GM12878 (cell line): ENCODE measurements at regions of chr1 and their contacts with region 1.

Region 1: DNA sequence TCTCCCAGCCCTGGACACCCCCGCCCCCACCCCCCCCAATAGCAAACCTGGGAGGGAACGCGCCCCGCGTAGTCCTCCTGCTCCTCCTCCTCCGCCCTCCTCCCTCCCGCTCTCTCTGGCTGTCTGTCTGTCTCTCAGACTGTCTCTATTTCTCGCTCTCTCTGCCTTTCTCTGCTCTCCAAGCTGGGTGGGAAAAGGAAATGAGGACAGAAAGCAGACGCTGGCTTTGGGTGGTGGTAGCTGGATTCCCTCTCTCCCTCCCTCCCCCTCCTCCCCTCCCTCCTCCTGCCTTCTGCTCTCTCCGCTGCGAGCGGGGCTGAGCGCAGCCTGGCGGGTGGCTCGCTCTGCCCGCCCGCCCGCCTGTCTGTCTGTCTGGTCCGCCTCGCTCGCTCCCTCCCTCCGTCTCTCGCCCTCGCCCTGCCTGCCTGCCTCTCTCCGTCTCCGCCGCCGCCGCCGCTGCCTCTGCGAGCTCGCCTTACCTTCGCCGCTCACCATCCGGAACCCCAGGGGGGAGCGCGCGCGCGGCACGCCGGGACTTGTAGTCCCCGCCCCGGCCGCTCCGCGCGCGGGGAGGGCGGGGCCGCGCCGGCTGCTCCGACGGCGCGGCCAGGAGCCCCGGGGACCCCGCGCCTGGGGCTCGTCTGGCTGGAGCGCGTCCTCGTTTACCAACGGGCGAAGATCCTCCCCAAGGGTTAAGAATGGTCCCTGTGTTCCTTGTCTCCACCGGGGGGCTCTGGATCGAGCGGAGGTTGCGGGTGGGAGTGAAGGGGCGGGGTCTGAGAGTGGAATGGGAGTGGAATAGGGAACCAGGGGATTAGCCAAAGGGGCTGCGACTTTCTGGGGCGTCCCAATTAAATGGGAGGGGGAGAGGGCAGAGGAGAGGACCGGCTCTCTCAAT is at the start of gene AHDC1:
- DNase-seq: no peak
- ATAC-seq: peak; percentile 75
- H3K4me3 ChIP-seq: peak within 1 kb of the TSS; percentile 83
- H3K27ac ChIP-seq: no peak within 1 kb of the TSS; the same call in 1 of the 2 replicates
- H3K4me1 ChIP-seq: peaks cover 40% of the 10 kb centered on the region
- H3K27me3 ChIP-seq: no peaks in the 10 kb centered on the region
- CTCF ChIP-seq: no peak
- EP300 ChIP-seq: no peak
- POLR2A ChIP-seq: peak; percentile 94
- RAD21 ChIP-seq: no peak
- polyA plus RNA-seq, gene AHDC1: 0.21 to 0.26 TPM

Region 2: DNA sequence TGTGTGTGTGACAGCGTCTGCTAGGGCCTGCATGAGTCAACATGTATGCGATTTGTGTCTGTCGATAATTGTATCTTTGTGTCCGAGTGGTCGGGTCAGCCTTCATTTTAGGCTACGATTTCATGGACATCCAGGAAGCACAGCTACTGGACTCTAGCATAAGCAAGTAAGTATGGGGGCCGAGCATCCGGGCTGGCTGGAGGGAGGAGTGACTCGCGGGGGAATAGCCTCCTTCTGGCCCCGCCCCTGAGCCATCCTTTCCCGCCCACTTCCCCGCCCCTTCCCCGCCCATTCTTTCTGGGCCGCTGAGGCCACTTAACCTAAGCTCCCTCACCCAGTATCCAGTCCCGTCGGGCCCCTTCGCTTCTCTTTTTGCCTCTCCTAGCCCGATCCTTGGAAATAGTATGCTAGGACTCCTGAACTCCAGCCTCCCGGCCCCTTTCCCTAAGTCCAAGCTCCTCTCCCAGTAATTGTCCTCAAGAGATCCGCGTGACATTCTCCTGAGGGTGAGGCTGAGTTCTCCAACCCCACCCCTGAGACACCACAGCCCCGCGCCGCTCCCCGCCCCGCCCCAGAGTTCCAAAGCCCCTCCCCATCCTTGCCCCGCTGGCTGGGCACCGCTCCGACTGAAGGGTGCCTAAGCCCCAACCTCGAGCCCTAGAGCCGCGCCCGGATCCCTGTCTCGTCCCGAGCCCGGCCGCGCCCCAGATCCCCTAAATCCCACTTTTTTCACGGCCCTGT is 238.4 kb before region 1 on chr1:
- CTCF ChIA-PET with region 1: interaction called, 28 read pairs
- POLR2A ChIA-PET with region 1: interaction called, 4 read pairs
- RAD21 ChIA-PET with region 1: interaction called, 7 read pairs
- SMC1A ChIA-PET with region 1: no interaction called
- in situ Hi-C with region 1: no loop called
- intact Hi-C with region 1: no loop called
- DNase-seq: no peak
- ATAC-seq: peak; percentile 83
- H3K4me3 ChIP-seq: peak overlapping the region; percentile 76
- H3K27ac ChIP-seq: no peak overlapping the region
- H3K4me1 ChIP-seq: peaks cover 15% of the 10 kb centered on the region
- H3K27me3 ChIP-seq: no peaks in the 10 kb centered on the region
- CTCF ChIP-seq: no peak
- EP300 ChIP-seq: 0 out of 4 replicates have a peak, but pooled peaks of 1 of the 2 experiments have one; percentile 18
- POLR2A ChIP-seq: peak; percentile 50
- RAD21 ChIP-seq: no peak

Region 3: DNA sequence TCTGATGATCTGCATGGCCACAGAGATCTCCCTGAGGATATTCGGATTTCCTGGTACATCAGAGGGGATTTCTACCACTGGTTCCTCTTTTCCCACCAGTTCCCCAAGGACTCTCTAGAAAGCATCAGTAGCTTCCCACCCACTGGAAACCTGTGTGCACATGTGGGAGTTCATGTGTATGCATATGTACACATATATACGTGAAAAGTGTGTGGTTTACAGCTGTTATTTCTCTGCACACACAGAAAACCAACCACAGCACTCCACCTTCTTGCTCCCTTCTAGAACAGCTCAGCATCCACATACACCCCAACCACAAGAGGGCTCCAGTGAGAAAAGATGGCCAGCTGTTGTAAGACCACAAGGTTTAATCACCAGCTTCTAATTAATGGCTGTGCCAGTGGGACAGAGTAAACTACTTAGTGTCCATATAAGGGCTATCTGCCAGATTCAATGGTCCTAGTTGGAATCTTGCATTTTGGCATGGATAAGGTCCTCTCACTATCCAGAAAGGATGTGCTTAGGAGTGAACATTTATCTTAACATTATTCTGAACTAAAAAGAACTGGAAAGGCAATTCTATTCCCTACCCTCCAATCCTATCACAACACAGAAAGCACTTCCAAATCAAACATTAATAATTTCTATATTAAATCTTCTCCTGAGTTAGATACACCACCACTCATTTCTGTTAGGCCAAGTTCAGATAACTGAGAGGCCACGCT is 187.4 kb before region 1 on chr1:
- CTCF ChIA-PET with region 1: interaction called, 155 read pairs
- POLR2A ChIA-PET with region 1: interaction called, 8 read pairs
- RAD21 ChIA-PET with region 1: interaction called, 23 read pairs
- SMC1A ChIA-PET with region 1: interaction called, 47 read pairs
- in situ Hi-C with region 1: no loop called
- intact Hi-C with region 1: loop called (anchors 1 kb)
- DNase-seq: peak; percentile 70
- ATAC-seq: peak; percentile 73
- H3K4me3 ChIP-seq: no peak overlapping the region
- H3K27ac ChIP-seq: peak overlapping the region; percentile 74
- H3K4me1 ChIP-seq: peaks cover 36% of the 10 kb centered on the region
- H3K27me3 ChIP-seq: no peaks in the 10 kb centered on the region
- CTCF ChIP-seq: peak; percentile 74 to 82 (median 74)
- EP300 ChIP-seq: 0 out of 4 replicates have a peak, but pooled peaks of 1 of the 2 experiments have one; percentile 26
- POLR2A ChIP-seq: no peak
- RAD21 ChIP-seq: peak; percentile 87

Region 4: GRCh38 chr1:27568300-27569087 is 35.4 kb before region 1 on chr1:
- CTCF ChIA-PET with region 1: interaction called, 47 read pairs
- POLR2A ChIA-PET with region 1: interaction called, 7 read pairs
- RAD21 ChIA-PET with region 1: interaction called, 17 read pairs
- SMC1A ChIA-PET with region 1: interaction called, 6 read pairs
- in situ Hi-C with region 1: no loop called
- intact Hi-C with region 1: loop called (anchors 1 kb)
- DNase-seq: peak; percentile 60
- ATAC-seq: peak; percentile 95
- H3K4me3 ChIP-seq: peak overlapping the region; percentile 52; the same call in 1 of the 2 replicates
- H3K27ac ChIP-seq: no peak overlapping the region
- H3K4me1 ChIP-seq: peaks cover 7% of the 10 kb centered on the region
- H3K27me3 ChIP-seq: no peaks in the 10 kb centered on the region
- CTCF ChIP-seq: peak; percentile 64 to 69 (median 68)
- EP300 ChIP-seq: no peak
- POLR2A ChIP-seq: no peak
- RAD21 ChIP-seq: peak; percentile 46

Region 5: DNA sequence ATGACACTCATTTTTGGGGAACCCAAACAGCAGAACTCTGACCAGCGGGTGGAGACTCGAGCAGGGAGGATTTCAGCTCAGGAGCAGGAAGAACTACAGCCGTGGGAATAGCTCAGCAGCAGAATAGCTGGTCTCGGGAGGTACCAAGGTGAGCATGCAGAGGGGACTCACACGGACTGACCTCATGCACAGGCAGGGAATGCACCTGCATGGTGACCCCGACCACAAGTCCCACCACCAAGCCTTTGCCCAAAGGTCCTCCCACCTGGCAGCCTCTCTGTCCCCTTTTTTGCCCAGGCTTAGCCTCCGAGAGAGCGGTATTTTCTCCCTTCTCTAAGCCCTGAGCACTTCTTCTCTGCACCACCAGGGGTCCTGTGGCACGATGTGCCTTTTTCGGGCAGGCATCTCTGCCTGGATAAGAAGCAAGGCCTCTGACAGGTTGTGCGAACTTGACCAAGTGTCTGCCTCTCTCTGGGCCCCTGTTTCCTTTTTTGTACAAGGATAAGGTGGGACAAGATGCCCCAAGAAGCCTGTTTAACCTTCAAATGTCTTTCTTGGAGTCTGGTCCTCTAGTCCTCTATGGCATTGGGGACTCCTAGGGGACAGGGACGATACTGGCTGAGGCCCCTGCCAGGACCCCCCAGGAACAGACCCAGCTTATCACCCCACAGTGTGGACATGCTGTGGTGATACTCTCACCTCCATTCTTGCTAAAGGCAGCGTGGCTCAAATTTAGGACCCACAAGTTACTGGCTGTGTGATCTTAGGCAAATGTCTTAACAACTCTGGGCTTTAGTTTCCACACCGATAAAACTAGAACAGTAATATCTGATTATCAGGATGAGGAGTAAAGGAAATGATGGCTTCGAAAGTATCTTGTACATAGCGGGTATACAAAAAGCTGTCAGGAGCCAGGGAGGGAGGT is 40.0 kb after region 1 on chr1:
- CTCF ChIA-PET with region 1: interaction called, 19 read pairs
- POLR2A ChIA-PET with region 1: interaction called, 5 read pairs
- RAD21 ChIA-PET with region 1: interaction called, 4 read pairs
- SMC1A ChIA-PET with region 1: interaction called, 13 read pairs
- in situ Hi-C with region 1: no loop called
- intact Hi-C with region 1: no loop called
- DNase-seq: no peak
- ATAC-seq: peak; percentile 99
- H3K4me3 ChIP-seq: no peak overlapping the region
- H3K27ac ChIP-seq: no peak overlapping the region
- H3K4me1 ChIP-seq: peaks cover 8% of the 10 kb centered on the region
- H3K27me3 ChIP-seq: no peaks in the 10 kb centered on the region
- CTCF ChIP-seq: peak; percentile 80 to 98 (median 94)
- EP300 ChIP-seq: no peak
- POLR2A ChIP-seq: no peak
- RAD21 ChIP-seq: peak; percentile 81

Region 6: GRCh38 chr1:27662707-27663393 is 58.9 kb after region 1 on chr1:
- CTCF ChIA-PET with region 1: interaction called, 327 read pairs
- POLR2A ChIA-PET with region 1: interaction called, 67 read pairs
- RAD21 ChIA-PET with region 1: interaction called, 268 read pairs
- SMC1A ChIA-PET with region 1: interaction called, 248 read pairs
- in situ Hi-C with region 1: loop called (anchors 5 kb)
- intact Hi-C with region 1: loop called (anchors 1 kb)
- DNase-seq: peak; percentile 78
- ATAC-seq: peak; percentile 65
- H3K4me3 ChIP-seq: peak overlapping the region; percentile 3; the same call in 1 of the 2 replicates
- H3K27ac ChIP-seq: peak overlapping the region; percentile 90
- H3K4me1 ChIP-seq: peaks cover 43% of the 10 kb centered on the region
- H3K27me3 ChIP-seq: no peaks in the 10 kb centered on the region
- CTCF ChIP-seq: peak; percentile 83 to 85 (median 85)
- EP300 ChIP-seq: no peak
- POLR2A ChIP-seq: peak; percentile 73
- RAD21 ChIP-seq: peak; percentile 97

Region 7: GRCh38 chr1:27744556-27744955 is 140.6 kb after region 1 on chr1:
- CTCF ChIA-PET with region 1: no interaction called
- POLR2A ChIA-PET with region 1: no interaction called
- RAD21 ChIA-PET with region 1: no interaction called
- SMC1A ChIA-PET with region 1: no interaction called
- in situ Hi-C with region 1: no loop called
- intact Hi-C with region 1: no loop called
- DNase-seq: no peak
- ATAC-seq: no peak
- H3K4me3 ChIP-seq: no peak overlapping the region
- H3K27ac ChIP-seq: no peak overlapping the region
- H3K4me1 ChIP-seq: no peaks in the 10 kb centered on the region
- H3K27me3 ChIP-seq: no peaks in the 10 kb centered on the region
- CTCF ChIP-seq: no peak
- EP300 ChIP-seq: no peak
- POLR2A ChIP-seq: no peak
- RAD21 ChIP-seq: no peak